ENCODE measurements at regions of chr6 and their contacts with region 1.

Region 1: GRCh38 chr6:110528101-110528929 is 51.9 kb upstream of the SLC22A16 start:
- DNase-seq: no peak
- ATAC-seq: peak; percentile 78

Region 2: DNA sequence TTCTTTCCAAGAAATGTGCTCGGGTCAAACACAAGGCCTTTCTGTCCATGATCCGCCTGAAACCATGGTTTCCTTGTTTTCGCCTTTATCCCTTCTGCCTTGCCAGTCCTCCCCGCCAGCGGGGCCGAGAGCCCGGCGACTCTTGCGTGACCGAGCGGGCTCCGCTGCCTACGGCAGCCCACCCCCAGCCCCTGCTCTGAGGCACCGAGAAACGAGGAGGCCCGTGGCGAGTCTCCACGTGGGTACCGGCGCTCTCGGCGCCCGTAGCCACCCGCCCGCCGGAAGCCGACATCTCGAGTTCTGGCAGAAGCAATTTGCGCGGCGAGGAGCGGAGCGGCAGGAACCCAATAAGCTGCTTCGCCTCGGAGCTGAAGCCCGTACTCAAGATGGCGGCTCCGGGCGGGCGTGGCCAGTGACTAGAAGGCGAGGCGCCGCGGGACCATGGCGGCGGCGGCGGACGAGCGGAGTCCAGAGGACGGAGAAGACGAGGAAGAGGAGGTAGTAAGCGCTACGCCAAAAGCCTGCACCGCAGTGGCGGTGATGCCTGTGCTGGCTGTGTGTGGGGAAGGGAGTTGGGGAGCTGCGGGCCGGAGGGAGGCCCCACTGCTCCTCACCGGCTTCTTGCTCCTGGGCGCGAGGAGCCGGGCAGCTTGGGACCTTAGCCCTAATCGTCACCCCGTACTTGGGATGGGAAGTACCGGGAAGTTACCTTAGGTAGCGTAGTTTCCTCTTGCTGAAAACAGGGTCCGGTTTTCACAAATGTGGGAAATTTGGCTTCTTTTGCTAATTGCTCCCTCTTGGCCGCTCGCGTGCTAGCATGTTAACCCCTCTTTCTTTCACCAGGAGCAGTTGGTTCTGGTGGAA is 430.2 kb after region 1 on chr6 and contains the start of gene GTF3C6:
- intact Hi-C with region 1: loop called (anchors 10 kb)
- DNase-seq: peak; percentile 97
- ATAC-seq: peak; percentile 99
- total RNA-seq, gene GTF3C6: 116 TPM

Measured in left ventricle myocardium superior (tissue), 1 donor.